Mammary epithelial cell (primary cell): ENCODE measurements at regions of chr12 and their contacts with region 1.

Region 1: GRCh38 chr12:33476046-33476445 is 36.4 kb upstream of the SYT10 start:
- DNase-seq: peak; percentile 60
- H3K4me3 ChIP-seq: no peak overlapping the region
- H3K27ac ChIP-seq: no peak overlapping the region
- H3K4me1 ChIP-seq: peaks cover 7% of the 10 kb centered on the region
- H3K27me3 ChIP-seq: no peaks in the 10 kb centered on the region
- CTCF ChIP-seq: no peak

Region 2: GRCh38 chr12:33587870-33588712 is 112.0 kb after region 1 on chr12:
- CTCF ChIA-PET with region 1: no interaction called
- dilution Hi-C with region 1: no loop called
- in situ Hi-C with region 1: loop called in 1 of 2 experiments (anchors 25 kb)
- intact Hi-C with region 1: no loop called
- DNase-seq: peak; percentile 93
- H3K4me3 ChIP-seq: no peak overlapping the region
- H3K27ac ChIP-seq: peak overlapping the region; percentile 78
- H3K4me1 ChIP-seq: peaks cover 26% of the 10 kb centered on the region
- H3K27me3 ChIP-seq: no peaks in the 10 kb centered on the region
- CTCF ChIP-seq: no peak